ENCODE measurements at regions of chr16 and their contacts with region 1.

Region 1: GRCh38 chr16:70395345-70395901 is 43.5 kb downstream of the ST3GAL2 start:
- DNase-seq: peak; percentile 89
- H3K4me3 ChIP-seq: no peak overlapping the region
- H3K27ac ChIP-seq: peak overlapping the region in 1 of 4 donors; percentile 15
- H3K4me1 ChIP-seq: peaks cover 0 to 9% (median 3%) of the 10 kb centered on the region in 4 donors
- H3K27me3 ChIP-seq: no peaks in the 10 kb centered on the region
- CTCF ChIP-seq: peak; percentile 61 to 84 (median 75)
- EP300 ChIP-seq: no peak
- POLR2A ChIP-seq: no peak

Region 2: GRCh38 chr16:70444249-70445063 is 49.0 kb after region 1 on chr16:
- in situ Hi-C with region 1: loop called in 1 of 4 experiments (anchors 10 kb)
- intact Hi-C with region 1: no loop called
- DNase-seq: peak; percentile 48
- H3K4me3 ChIP-seq: peak overlapping the region in 1 of 4 donors; percentile 8
- H3K27ac ChIP-seq: peak overlapping the region; percentile 57 to 76 (median 64)
- H3K4me1 ChIP-seq: peaks cover 3 to 28% (median 13%) of the 10 kb centered on the region in 4 donors
- H3K27me3 ChIP-seq: no peaks in the 10 kb centered on the region
- CTCF ChIP-seq: no peak
- EP300 ChIP-seq: no peak
- POLR2A ChIP-seq: no peak

Measured in transverse colon (tissue), 4 donors.